PC-9 (cell line): ENCODE measurements at regions of chr12 and their contacts with region 1.

Region 1: DNA sequence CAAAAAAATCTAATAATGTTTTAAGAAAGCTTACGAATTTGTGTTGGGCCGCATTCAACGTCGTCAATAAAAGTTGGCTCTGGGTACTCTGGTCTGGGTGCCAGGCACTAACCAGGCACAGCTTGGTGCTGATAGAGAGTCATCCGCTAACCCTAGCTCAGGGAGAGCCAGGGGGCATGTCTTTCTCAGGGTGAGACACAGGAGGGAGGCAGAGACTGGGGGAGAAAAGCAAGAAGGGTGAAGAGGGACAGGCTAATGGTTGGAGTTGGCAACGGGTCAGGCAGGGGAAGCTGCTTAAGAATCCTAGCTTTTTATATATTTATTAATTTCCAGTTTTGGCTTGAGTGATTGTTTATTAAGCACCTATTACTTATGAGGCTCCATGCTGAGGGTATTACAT is 105.0 kb downstream of the CMKLR1 start:
- DNase-seq: no peak
- H3K4me3 ChIP-seq: no peak overlapping the region
- H3K27ac ChIP-seq: no peak overlapping the region
- H3K4me1 ChIP-seq: no peaks in the 10 kb centered on the region
- H3K27me3 ChIP-seq: 0 out of 2 replicates have a peak, but pooled peaks cover 6% of the 10 kb centered on the region
- CTCF ChIP-seq: no peak

Region 2: GRCh38 chr12:107788690-107789458 is 445.3 kb before region 1 on chr12:
- CTCF ChIA-PET with region 1: no interaction called
- POLR2A ChIA-PET with region 1: no interaction called
- intact Hi-C with region 1: no loop called
- DNase-seq: no peak
- H3K4me3 ChIP-seq: no peak overlapping the region
- H3K27ac ChIP-seq: no peak overlapping the region
- H3K4me1 ChIP-seq: no peaks in the 10 kb centered on the region
- H3K27me3 ChIP-seq: peaks cover 85% of the 10 kb centered on the region
- CTCF ChIP-seq: no peak

Region 3: DNA sequence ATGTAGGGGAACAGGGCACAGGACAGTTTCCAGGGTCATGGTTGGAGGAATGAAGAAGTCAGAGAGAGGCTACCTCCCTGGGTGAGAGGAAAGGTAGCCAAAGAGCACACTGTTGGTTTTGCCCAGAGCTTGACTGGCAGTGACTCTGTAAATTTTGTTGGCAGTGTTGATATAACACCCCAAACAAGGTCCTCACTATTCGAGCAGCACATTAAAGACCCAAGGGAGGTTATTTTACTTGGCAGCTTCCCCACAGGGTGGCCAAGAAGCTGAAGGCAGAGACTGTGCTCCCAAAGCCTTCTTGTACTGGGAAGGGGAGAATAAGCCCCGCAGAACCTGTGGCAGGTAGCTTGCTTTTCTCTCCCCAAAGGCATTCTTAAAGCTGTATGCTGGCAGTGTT is 64.5 kb before region 1 on chr12:
- CTCF ChIA-PET with region 1: no interaction called
- POLR2A ChIA-PET with region 1: interaction called, 20 read pairs
- intact Hi-C with region 1: no loop called
- DNase-seq: no peak
- H3K4me3 ChIP-seq: no peak overlapping the region
- H3K27ac ChIP-seq: no peak overlapping the region
- H3K4me1 ChIP-seq: no peaks in the 10 kb centered on the region
- H3K27me3 ChIP-seq: peaks cover 14% of the 10 kb centered on the region
- CTCF ChIP-seq: no peak

Region 4: DNA sequence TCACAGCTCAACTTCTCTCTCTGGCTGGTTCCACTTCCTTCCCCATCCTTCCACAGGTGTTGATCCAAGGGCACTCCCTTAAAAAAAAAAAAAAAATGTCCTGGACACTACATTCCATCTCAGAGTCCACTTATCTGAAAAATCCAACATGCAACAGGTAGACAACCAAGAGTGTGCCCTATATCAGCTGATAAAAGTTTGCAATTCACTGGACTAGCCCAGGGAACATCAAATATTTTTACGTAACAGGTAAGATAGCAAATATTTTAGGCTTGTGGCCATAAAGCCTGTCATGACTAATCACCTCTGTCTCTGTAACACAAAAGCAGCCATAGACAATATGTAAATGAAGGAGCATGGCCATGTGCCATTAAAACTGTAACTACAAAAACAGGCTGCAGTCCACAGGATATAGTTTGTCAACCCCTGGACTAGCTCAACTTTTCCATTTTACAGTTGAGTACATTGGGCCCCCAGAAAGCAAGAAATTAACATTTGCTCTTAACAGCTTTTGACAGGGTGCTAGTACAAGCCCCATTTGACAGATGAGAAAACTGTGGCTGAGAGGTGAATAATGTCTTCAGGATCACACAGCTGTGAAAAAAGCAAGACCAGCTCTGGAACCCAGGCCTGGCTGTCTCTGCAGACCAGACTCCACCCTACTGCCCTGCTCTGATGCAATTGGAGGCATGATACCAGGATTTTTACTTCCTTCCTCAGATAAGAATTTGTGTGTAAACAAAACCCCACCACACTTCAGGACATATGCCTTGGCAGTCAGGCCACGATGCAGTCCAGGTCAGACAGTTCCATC is 36.1 kb after region 1 on chr12:
- CTCF ChIA-PET with region 1: no interaction called
- POLR2A ChIA-PET with region 1: no interaction called
- intact Hi-C with region 1: no loop called
- DNase-seq: no peak
- H3K4me3 ChIP-seq: no peak overlapping the region
- H3K27ac ChIP-seq: no peak overlapping the region
- H3K4me1 ChIP-seq: no peaks in the 10 kb centered on the region
- H3K27me3 ChIP-seq: no peaks in the 10 kb centered on the region
- CTCF ChIP-seq: no peak